Prostate gland (tissue), 2 donors: ENCODE measurements at regions of chr5 and their contacts with region 1.

Region 1: GRCh38 chr5:96601811-96602244 is 60.3 kb upstream of the CAST start:
- DNase-seq: peak; percentile 76
- H3K4me3 ChIP-seq: no peak overlapping the region
- H3K27ac ChIP-seq: no peak overlapping the region
- H3K4me1 ChIP-seq: no peaks in the 10 kb centered on the region
- H3K27me3 ChIP-seq: no peaks in the 10 kb centered on the region
- CTCF ChIP-seq: peak; percentile 72 to 84 (median 77)
- POLR2A ChIP-seq: no peak

Region 2: DNA sequence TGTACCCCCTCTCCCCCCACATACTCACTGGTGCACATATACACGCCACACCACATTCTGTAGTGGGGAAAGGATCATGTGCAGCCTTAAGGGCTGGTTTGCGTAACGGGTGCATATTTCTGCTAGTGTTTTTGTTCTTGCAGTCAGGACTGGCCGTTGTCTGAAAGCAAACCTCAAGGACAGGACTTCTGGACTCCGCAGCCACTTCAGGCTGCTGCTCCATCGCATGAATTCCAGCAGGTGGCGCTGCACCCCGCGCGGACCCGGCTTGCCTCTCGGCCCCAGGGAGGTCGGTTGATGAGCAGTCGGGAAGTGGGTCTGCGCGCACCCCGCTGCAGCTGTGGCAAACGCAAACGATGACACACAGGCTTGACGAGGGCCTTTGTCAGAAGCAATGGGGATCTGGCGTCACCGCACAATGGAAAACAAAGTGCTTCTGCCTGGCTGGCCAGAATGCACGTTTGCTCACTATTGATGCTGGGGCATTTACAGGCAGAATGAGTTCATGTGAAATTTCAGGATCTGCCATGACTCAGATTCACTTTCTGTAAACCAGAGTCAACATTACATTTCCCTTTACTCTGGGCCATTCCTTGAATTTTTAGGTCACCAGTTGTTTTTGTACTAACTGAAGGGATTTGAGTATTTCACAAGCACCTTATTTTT is 743.0 kb before region 1 on chr5:
- intact Hi-C with region 1: loop called (anchors 5 kb)
- DNase-seq: peak; percentile 80
- H3K4me3 ChIP-seq: peak overlapping the region; percentile 7 to 14
- H3K27ac ChIP-seq: peak overlapping the region; percentile 75 to 78
- H3K4me1 ChIP-seq: peaks cover 3% of the 10 kb centered on the region
- H3K27me3 ChIP-seq: no peaks in the 10 kb centered on the region
- CTCF ChIP-seq: peak; percentile 92 to 99 (median 98)
- POLR2A ChIP-seq: peak; percentile 36

Region 3: GRCh38 chr5:96275051-96275450 is 326.8 kb before region 1 on chr5:
- intact Hi-C with region 1: no loop called
- DNase-seq: no peak
- H3K4me3 ChIP-seq: no peak overlapping the region
- H3K27ac ChIP-seq: no peak overlapping the region
- H3K4me1 ChIP-seq: no peaks in the 10 kb centered on the region
- H3K27me3 ChIP-seq: no peaks in the 10 kb centered on the region
- CTCF ChIP-seq: no peak
- POLR2A ChIP-seq: no peak

Region 4: GRCh38 chr5:96344678-96345577 is 256.9 kb before region 1 on chr5:
- intact Hi-C with region 1: loop called (anchors 2 kb)
- DNase-seq: peak; percentile 61
- H3K4me3 ChIP-seq: no peak overlapping the region
- H3K27ac ChIP-seq: no peak overlapping the region
- H3K4me1 ChIP-seq: no peaks in the 10 kb centered on the region
- H3K27me3 ChIP-seq: no peaks in the 10 kb centered on the region
- CTCF ChIP-seq: peak in 3 of 4 experiments; percentile 50 to 80 (median 75)
- POLR2A ChIP-seq: no peak

Region 5: GRCh38 chr5:96657087-96657665 is 55.3 kb after region 1 on chr5:
- intact Hi-C with region 1: loop called (anchors 10 kb)
- DNase-seq: no peak
- H3K4me3 ChIP-seq: no peak overlapping the region
- H3K27ac ChIP-seq: no peak overlapping the region
- H3K4me1 ChIP-seq: no peaks in the 10 kb centered on the region
- H3K27me3 ChIP-seq: no peaks in the 10 kb centered on the region
- CTCF ChIP-seq: no peak
- POLR2A ChIP-seq: no peak

Region 6: GRCh38 chr5:96919754-96920197 is 317.9 kb after region 1 on chr5:
- intact Hi-C with region 1: no loop called
- DNase-seq: no peak
- H3K4me3 ChIP-seq: no peak overlapping the region
- H3K27ac ChIP-seq: no peak overlapping the region
- H3K4me1 ChIP-seq: no peaks in the 10 kb centered on the region
- H3K27me3 ChIP-seq: no peaks in the 10 kb centered on the region
- CTCF ChIP-seq: no peak
- POLR2A ChIP-seq: no peak